ENCODE measurements at regions of chr16 and their contacts with region 1.

Region 1: DNA sequence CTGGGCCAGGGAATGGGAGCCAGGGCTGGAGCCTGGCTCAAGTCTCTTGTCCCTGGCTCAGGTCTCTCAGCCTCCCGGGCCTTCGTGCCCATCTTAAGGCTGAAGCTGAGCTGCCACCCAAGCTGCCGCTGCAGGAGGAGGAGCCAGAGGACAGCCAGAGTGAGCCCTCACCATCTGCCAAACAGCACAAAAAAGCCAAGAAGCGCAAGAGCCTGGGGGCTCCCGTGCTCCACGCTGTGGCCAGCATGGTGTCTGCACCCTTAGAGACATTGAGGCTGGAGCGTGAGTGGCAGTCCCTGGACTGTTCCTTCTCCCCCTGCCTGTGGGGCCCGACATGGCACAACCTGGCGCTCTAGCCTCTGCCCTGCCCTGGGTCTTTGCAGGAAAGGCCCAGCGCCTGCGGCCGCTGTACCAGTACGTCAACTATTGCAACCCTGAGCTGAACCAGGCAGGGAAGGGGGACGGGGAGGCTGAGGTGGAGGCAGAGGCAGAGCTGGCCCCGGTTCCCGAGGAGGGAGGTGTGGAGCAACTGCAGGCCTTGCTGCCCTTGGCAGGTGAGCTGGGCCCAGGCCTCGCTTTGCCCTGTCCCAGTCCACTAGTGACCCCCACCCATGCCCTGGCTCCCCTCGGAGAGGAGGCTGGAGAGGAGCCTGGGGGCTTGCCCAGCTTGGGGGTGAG is 1.3 kb downstream of the C16orf86 start:
- DNase-seq: peak; percentile 75 to 85 (median 81)
- H3K4me3 ChIP-seq: peak overlapping the region; percentile 66
- H3K27ac ChIP-seq: peak overlapping the region in 1 of 2 donors; percentile 65
- H3K4me1 ChIP-seq: peaks cover 10% of the 10 kb centered on the region
- H3K27me3 ChIP-seq: no peaks in the 10 kb centered on the region
- CTCF ChIP-seq: peak; percentile 85 to 92 (median 89)
- EP300 ChIP-seq: no peak
- POLR2A ChIP-seq: no peak

Region 2: DNA sequence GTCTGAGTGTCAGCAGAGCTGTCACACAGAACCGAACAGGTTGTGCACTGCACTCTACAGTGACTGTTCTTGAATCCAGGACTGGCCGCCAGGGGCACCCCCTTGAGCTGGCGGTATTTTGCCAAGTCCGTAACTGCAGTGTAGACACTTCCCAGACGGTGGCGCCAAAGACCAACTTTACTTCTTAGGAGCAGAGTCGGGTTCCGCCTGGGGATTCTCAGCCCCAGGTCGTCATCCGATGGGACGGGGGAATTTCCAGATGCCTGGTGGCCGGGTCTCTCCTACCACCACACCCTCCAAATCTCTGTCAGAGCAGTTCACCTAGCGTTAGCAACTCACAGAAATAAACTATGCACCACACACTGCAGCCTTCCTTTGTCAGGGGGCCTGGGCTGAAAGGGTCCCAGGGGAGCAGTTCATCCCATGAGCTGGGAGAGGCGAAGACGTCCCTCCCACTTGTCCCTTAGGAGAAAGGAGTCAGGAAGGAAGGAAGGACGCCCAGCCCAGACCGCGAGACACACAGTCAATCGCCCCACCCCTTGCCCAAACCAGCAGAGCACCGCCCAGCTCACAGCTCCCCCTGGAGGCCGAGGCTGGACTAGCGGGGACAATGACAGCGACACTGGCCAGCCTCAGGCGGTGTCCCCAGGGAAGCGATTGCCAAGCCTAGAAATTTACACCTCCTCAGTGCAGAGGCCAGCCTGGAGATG is 146.7 kb before region 1 on chr16:
- intact Hi-C with region 1: loop called in 2 of 4 experiments (anchors 5 to 10 kb)
- DNase-seq: peak; percentile 90 to 97 (median 95)
- H3K4me3 ChIP-seq: peak overlapping the region; percentile 42
- H3K27ac ChIP-seq: peak overlapping the region; percentile 54 to 88
- H3K4me1 ChIP-seq: no peaks in the 10 kb centered on the region
- H3K27me3 ChIP-seq: no peaks in the 10 kb centered on the region
- CTCF ChIP-seq: peak; percentile 51 to 96 (median 94)
- EP300 ChIP-seq: no peak
- POLR2A ChIP-seq: no peak

Region 3: DNA sequence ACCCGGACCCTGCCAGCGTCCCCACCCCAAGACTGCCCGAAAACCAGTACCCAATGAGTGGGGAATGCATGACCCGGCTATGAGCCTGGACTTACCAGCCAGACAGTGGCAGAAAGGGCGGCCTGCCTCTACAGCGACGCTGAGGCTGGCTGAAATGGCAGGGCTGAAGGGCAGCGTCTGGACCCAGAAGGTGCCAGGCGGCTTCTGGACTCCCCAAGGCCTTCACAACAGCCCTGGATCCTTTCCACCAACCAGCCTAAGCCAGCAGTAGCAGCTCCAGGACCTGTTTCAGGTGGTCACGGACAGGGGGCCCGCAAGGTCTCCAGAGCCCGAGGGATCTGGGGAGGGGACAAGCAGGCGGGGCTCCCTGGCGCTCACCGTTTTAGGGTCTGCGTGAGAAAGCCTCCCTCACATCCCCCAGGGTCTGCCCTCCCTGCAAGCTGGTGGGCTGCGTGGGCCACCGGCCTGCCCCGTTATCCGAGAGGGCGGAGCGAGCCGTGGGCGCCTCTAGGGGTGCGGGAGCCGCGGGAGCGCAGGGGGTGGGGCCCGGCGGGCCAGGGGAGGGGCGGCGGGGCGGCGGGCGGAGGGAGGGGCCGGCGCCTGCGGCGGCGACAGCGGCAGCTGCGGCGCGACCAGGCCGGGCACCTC is 139.6 kb before region 1 on chr16 and contains the start of gene RIPOR1:
- intact Hi-C with region 1: loop called in 2 of 4 experiments (anchors 5 to 10 kb)
- DNase-seq: peak; percentile 58 to 75 (median 68)
- H3K4me3 ChIP-seq: peak within 1 kb of the TSS; percentile 88
- H3K27ac ChIP-seq: peak within 1 kb of the TSS; percentile 56 to 85
- H3K4me1 ChIP-seq: peaks cover 12% of the 10 kb centered on the region
- H3K27me3 ChIP-seq: no peaks in the 10 kb centered on the region
- CTCF ChIP-seq: no peak
- EP300 ChIP-seq: no peak
- POLR2A ChIP-seq: no peak
- total RNA-seq, gene RIPOR1: 22.3 to 96.3 (median 85.6) TPM

Region 4: DNA sequence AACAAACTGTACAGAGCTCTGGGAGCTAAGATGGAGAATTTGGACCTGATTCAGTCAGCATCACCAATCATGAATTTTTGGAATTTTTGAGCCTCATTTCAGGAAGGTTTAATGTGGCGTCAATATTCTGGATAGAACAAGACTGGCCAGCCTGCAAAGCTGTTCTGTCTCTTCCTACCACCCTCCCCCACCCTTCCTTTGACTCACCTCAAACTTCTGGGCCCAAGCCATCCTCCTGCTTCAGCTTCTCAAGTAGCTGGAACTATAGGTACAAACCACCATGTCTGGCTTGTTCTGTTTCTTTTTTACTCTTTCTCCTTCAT is 73.0 kb before region 1 on chr16:
- intact Hi-C with region 1: no loop called
- DNase-seq: peak in 1 of 5 donors; percentile 15
- H3K4me3 ChIP-seq: no peak overlapping the region
- H3K27ac ChIP-seq: no peak overlapping the region
- H3K4me1 ChIP-seq: peaks cover 2% of the 10 kb centered on the region
- H3K27me3 ChIP-seq: no peaks in the 10 kb centered on the region
- CTCF ChIP-seq: no peak
- EP300 ChIP-seq: no peak
- POLR2A ChIP-seq: no peak

Region 5: GRCh38 chr16:67935402-67936123 is 267.6 kb after region 1 on chr16:
- intact Hi-C with region 1: loop called in 1 of 4 experiments (anchors 10 kb)
- DNase-seq: peak; percentile 94 to 96 (median 94)
- H3K4me3 ChIP-seq: peak overlapping the region; percentile 96
- H3K27ac ChIP-seq: peak overlapping the region; percentile 83 to 85
- H3K4me1 ChIP-seq: peaks cover 15% of the 10 kb centered on the region
- H3K27me3 ChIP-seq: no peaks in the 10 kb centered on the region
- CTCF ChIP-seq: peak in 1 of 3 donors; percentile 8
- EP300 ChIP-seq: no peak
- POLR2A ChIP-seq: peak; percentile 70